ENCODE measurements at regions of chr12 and their contacts with region 1.

Region 1: GRCh38 chr12:54294152-54294952 is 6.5 kb downstream of the NFE2 start:
- DNase-seq: peak in 2 of 5 donors; percentile 19 to 67
- H3K4me3 ChIP-seq: no peak overlapping the region
- H3K27ac ChIP-seq: no peak overlapping the region
- H3K4me1 ChIP-seq: no peaks in the 10 kb centered on the region
- H3K27me3 ChIP-seq: no peaks in the 10 kb centered on the region
- CTCF ChIP-seq: peak; percentile 63

Region 2: DNA sequence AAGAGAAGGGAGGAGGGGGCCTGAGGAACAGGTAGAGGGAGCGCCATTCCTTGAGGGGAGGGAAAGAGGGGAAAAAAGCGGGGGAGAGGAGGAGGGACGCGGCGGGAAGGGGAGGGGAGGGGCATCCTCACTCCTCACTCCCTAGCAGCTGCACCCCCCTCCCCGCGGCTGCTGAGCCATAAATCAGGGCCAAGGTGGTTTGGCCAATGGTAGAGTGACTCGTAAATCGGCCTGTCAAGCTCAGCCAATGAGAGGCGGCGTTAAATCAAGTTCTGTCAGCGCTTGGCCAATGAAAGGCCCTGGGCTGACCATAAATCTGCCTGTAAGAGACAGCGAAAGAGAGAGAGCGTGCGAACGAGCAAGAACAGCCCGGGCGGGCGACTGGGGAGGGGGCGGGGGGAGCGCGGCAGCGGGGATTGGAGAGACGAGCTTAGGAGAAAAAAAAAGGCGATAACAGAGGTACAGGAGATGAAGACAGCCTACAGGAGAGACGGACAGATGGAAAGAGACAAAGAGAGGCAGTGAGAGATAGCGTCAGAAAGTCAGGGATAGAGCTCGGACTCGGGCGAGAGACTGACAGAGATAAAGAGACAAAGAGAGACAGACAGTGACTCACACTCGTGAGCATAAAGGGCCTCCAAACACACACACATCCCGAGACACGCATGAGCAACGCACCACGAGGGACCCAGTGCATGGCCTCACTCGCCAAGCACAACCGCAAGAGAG is 64.8 kb after region 1 on chr12:
- intact Hi-C with region 1: loop called (anchors 10 kb)
- DNase-seq: peak; percentile 98 to 100 (median 99)
- H3K4me3 ChIP-seq: peak overlapping the region; percentile 74 to 92 (median 83)
- H3K27ac ChIP-seq: peak overlapping the region; percentile 77 to 89
- H3K4me1 ChIP-seq: peaks cover 2 to 18% (median 9%) of the 10 kb centered on the region in 3 donors
- H3K27me3 ChIP-seq: no peaks in the 10 kb centered on the region
- CTCF ChIP-seq: no peak